ENCODE measurements at regions of chr16 and their contacts with region 1.

Region 1: DNA sequence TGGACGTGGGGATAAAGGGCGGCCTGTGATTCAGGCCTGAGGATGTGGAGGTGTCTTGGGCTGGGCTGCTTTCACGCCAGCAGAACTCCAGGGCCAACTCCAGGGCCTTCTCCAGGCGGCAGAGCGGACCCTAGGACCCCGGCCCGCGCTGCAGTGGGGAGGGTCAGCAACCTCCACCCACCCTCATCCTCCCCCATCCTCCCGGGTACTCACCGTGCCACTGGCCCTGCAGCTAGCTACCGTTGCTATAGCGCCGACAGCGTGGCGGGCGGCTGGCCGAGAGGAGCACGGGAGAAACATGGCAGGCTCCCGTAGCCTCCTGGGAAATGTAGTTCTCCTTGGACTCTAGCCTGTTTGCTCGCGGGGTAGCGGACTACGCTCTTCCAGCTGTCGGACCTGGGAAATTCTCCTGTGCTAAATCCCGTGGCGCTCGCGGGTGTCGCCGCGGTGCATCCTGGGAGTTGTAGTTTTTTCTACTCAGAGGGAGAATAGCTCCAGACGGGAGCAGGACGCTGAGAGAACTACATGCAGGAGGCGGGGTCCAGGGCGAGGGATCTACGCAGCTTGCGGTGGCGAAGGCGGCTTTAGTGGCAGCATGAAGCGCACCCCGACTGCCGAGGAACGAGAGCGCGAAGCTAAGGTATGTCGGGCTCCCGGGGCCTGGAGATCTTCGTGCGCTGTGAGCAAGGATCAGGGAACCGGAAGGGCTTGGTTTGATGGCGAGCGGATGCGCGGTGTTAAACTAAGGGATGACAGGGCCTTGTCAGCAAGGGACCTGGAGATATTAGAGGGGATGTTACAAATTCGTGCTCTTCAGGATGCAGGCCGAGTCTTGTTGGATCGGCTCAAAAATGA is at the starts of genes FTO and RPGRIP1L:
- DNase-seq: peak; percentile 99
- H3K4me3 ChIP-seq: peak within 1 kb of the TSS; percentile 61
- H3K27ac ChIP-seq: peak within 1 kb of the TSS; percentile 43
- H3K4me1 ChIP-seq: peaks cover 15% of the 10 kb centered on the region
- H3K27me3 ChIP-seq: no peaks in the 10 kb centered on the region
- CTCF ChIP-seq: no peak; the same call in 1 of the 2 replicates
- total RNA-seq, gene FTO: 72.7 and 73.4 TPM in 2 replicates
- total RNA-seq, gene RPGRIP1L: 18.3 and 19.8 TPM in 2 replicates

Region 2: DNA sequence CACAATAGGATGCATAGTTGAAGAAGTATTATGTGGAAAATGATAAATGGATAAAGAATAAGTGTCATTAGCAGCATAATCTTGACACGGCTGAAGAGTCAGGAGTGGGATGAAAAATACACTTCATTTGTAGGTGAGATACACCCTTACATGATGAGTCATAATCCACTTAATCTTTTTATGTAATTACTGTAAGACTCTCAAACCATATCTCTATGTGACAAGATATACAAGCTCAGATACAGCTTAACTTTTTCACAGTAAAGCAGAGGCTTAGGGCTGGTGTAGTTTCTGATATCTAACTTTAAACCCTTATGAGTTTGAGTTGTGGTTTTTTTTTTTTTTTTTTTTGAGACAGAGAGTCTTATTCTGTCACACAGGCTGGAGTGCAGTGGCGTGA is 101.3 kb after region 1 on chr16:
- CTCF ChIA-PET with region 1: no interaction called
- POLR2A ChIA-PET with region 1: no interaction called
- intact Hi-C with region 1: no loop called
- DNase-seq: no peak
- H3K4me3 ChIP-seq: no peak overlapping the region
- H3K27ac ChIP-seq: no peak overlapping the region
- H3K4me1 ChIP-seq: peaks cover 15% of the 10 kb centered on the region
- H3K27me3 ChIP-seq: no peaks in the 10 kb centered on the region
- CTCF ChIP-seq: no peak

Region 3: GRCh38 chr16:53840456-53840855 is 136.6 kb after region 1 on chr16:
- CTCF ChIA-PET with region 1: no interaction called
- POLR2A ChIA-PET with region 1: no interaction called
- intact Hi-C with region 1: loop called (anchors 10 kb)
- DNase-seq: no peak
- H3K4me3 ChIP-seq: no peak overlapping the region
- H3K27ac ChIP-seq: no peak overlapping the region
- H3K4me1 ChIP-seq: no peaks in the 10 kb centered on the region
- H3K27me3 ChIP-seq: no peaks in the 10 kb centered on the region
- CTCF ChIP-seq: no peak

Region 4: DNA sequence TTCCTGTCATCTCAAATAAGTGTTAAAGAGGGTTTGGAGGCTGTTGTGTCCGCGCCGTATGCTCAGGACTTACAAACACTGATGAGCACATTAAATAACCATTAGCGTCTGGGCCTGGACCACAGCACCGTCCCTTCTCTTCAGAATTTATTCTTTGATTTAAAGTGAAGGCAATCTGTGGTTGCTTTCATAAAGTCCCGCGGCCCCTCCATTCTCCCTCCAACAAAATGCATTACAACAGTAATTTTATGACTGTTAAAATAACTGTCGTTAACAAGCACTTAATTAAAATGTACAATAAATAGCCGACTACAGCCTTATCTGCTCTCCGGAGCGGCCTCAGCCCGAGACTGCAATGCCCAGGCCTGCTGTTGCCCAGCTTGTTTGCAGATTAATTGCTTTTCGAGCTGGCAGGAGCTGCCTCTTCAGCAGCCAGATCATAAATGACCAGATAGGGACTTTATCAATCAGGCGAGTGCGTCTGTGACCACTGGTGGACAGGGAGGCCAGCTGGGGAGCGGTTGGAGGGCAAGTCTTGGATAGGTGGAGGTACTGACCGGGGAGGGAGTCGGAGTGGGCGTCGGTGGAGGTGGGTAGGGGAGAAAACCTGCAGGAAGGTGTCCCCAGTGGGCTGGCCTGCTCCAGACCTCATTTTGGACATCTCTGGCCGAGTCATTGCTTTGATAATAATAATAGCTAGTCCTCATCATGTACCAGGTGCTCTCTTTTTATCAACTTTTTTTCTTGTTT is 613.5 kb after region 1 on chr16:
- CTCF ChIA-PET with region 1: no interaction called
- POLR2A ChIA-PET with region 1: no interaction called
- intact Hi-C with region 1: no loop called
- DNase-seq: no peak
- H3K4me3 ChIP-seq: no peak overlapping the region
- H3K27ac ChIP-seq: no peak overlapping the region
- H3K4me1 ChIP-seq: no peaks in the 10 kb centered on the region
- H3K27me3 ChIP-seq: no peaks in the 10 kb centered on the region
- CTCF ChIP-seq: no peak